Sciatic nerve (tissue), 2 donors: ENCODE measurements at regions of chr11 and their contacts with region 1.

Region 1: GRCh38 chr11:95150946-95151684 is 61.5 kb downstream of the ENDOD1 start:
- DNase-seq: peak; percentile 96
- ATAC-seq: peak; percentile 93

Region 2: GRCh38 chr11:94794287-94795168 is 356.6 kb before region 1 on chr11:
- intact Hi-C with region 1: no loop called
- DNase-seq: peak; percentile 68
- ATAC-seq: peak; percentile 83

Region 3: DNA sequence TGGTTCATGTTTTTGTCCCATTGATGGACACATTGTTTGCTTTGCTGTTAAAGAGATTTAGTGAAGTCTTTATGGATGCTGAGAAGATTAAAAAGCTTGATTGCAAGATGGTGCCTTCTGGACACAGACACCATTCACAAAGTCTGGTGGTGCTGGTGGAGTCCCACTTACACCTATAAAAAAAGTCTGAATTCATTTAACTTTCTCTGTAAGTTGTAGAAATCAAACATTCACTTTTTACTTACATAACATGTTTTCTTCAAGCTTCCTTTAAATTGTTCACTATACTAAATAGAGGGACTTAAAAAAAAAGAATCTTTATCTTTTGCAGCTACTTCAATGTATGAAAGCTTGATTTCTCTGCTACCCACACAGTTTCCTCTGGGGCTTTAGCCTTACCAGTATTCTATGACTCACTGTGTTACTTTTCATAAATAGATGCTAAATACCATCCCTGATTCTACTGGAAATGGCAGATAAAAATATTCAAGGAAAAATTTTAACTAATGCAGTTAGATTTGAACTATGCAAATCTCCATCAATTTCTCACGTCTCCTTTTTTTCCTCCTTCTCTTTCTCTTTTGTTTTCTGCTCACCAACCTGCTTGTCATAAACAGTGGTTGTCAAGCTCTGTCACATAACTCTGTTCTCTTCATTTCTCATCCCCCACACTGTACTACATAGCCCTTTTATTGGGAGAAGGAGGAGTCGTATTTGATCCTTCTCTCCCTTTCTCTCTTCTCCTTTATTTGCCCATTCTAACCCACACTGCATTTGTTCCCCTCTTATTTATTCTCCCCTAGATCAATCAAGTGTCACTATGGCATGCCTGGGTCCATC is 548.7 kb after region 1 on chr11:
- intact Hi-C with region 1: loop called (anchors 5 kb)
- DNase-seq: no peak
- ATAC-seq: no peak

Region 4: GRCh38 chr11:95764267-95764898 is 613.3 kb after region 1 on chr11:
- intact Hi-C with region 1: loop called (anchors 2 kb)
- DNase-seq: no peak
- ATAC-seq: peak; percentile 86